PC-9 (cell line): ENCODE measurements at regions of chr2 and their contacts with region 1.

Region 1: DNA sequence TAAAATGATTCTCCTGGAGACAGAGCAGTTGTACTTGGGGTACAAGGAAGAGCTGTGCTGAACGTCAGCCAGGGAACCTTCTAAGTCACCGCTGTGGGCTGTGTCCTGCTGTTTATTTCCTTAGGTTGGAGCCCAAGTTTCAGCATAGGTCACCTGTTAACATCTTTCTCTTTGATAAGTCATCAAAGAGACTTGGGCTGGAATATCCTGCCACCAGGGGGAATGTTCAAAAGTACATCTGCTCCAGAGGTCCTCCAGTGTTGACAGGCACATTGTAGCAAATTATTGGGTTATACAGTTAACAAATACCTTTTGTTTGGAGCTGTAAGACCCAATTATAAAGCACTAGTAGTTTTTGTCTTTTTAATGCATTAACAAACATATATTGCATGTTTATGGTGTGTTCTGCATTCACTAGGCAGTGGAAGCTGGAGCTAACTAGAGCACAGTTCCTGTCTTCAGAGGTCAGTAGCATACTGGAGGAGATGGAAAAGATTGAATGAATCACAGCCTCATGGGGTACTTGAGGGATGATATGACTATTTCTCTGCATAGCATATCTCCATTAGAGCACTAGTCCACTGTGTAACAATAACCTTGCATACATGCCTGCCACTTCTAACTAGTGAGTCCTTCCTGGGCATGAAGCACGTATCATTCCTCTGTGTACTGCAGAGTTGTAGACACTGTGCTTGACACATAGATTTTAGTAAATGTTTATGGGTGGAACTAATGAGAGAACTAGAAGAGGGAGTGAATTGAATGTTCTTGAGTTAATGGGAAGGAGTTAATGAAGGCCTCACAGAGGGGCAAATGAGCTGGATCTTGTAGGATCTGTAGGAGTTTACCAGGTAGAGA is 182.1 kb downstream of the AGAP1 start:
- DNase-seq: peak in 1 of 2 experiments; percentile 65
- H3K4me3 ChIP-seq: no peak overlapping the region; the same call in 1 of the 2 replicates
- H3K27ac ChIP-seq: peak overlapping the region; percentile 66
- H3K4me1 ChIP-seq: peaks cover 75% of the 10 kb centered on the region
- H3K27me3 ChIP-seq: no peaks in the 10 kb centered on the region
- CTCF ChIP-seq: peak; percentile 56; the same call in 1 of the 2 replicates

Region 2: DNA sequence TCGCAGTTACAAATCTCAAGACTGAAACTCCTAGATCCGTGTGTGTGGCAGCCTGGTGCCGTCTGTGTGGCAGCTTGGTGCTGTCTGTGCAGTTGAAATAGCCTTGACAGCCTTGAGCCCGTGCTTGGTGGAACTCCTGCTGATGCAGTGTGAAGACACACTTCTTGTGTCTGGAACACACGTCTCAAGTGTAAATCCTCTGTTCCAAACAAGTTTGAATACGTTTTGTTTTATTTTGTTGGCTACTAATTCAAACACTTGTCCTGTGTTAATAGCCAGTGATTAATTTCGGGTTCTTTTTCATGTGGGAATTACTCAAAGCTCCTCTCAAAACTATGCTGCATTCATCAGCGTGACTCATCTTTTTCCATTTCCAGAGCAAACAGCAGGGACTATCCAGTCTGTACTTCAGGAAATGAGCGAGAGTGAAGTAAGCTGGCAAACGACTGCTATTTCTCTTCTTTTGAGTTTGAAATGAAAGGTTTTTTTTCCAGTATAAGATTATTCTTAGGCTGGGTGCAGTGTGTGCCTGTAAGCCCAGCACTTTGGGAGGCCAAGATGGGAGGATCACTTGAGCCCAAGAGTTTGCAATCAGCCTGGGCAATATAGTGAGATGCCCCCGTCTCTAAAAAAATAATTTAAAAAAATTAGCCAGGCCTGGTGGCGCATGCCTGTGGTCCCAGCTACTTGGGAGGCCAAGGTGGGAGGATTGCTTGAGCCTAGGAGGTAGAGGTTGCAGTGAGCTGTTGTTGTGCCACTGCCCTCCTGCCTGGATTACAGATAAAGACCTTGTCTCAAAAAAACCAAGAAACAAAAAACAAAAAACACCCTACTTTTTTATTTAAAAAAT is 1472.5 kb before region 1 on chr2:
- CTCF ChIA-PET with region 1: no interaction called
- POLR2A ChIA-PET with region 1: interaction called, 14 read pairs
- intact Hi-C with region 1: no loop called
- DNase-seq: peak; percentile 63 to 98
- H3K4me3 ChIP-seq: peak overlapping the region; percentile 1; the same call in 1 of the 2 replicates
- H3K27ac ChIP-seq: peak overlapping the region; percentile 91
- H3K4me1 ChIP-seq: peaks cover 44% of the 10 kb centered on the region
- H3K27me3 ChIP-seq: no peaks in the 10 kb centered on the region
- CTCF ChIP-seq: no peak

Region 3: DNA sequence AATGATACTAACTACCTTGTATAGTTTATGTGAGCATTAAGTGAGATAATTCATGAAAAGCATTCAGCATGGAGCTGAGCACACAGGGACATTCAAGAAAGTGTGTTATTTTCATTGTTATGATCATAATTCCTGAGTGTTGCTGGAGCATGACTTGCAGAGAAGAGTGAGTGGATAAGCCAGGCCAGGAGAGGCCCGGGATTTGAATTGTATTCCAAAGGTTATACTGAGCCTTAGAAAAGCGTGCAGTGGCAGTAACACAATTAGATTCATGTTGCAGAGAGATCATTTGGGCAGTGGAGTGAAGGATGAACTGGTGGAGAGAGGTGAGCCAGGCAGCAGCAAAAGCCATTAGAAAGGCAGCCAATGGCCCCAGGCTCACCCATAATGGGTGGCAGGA is 867.0 kb before region 1 on chr2:
- CTCF ChIA-PET with region 1: no interaction called
- POLR2A ChIA-PET with region 1: no interaction called
- intact Hi-C with region 1: no loop called
- DNase-seq: no peak
- H3K4me3 ChIP-seq: no peak overlapping the region
- H3K27ac ChIP-seq: no peak overlapping the region
- H3K4me1 ChIP-seq: no peaks in the 10 kb centered on the region
- H3K27me3 ChIP-seq: no peaks in the 10 kb centered on the region
- CTCF ChIP-seq: no peak

Region 4: GRCh38 chr2:235703791-235704190 is 27.9 kb after region 1 on chr2:
- CTCF ChIA-PET with region 1: interaction called, 5 read pairs
- POLR2A ChIA-PET with region 1: interaction called, 5 read pairs
- intact Hi-C with region 1: loop called (anchors 2 kb)
- DNase-seq: peak in 1 of 2 experiments; percentile 32
- H3K4me3 ChIP-seq: no peak overlapping the region
- H3K27ac ChIP-seq: peak overlapping the region; percentile 79
- H3K4me1 ChIP-seq: peaks cover 58% of the 10 kb centered on the region
- H3K27me3 ChIP-seq: no peaks in the 10 kb centered on the region
- CTCF ChIP-seq: no peak

Region 5: DNA sequence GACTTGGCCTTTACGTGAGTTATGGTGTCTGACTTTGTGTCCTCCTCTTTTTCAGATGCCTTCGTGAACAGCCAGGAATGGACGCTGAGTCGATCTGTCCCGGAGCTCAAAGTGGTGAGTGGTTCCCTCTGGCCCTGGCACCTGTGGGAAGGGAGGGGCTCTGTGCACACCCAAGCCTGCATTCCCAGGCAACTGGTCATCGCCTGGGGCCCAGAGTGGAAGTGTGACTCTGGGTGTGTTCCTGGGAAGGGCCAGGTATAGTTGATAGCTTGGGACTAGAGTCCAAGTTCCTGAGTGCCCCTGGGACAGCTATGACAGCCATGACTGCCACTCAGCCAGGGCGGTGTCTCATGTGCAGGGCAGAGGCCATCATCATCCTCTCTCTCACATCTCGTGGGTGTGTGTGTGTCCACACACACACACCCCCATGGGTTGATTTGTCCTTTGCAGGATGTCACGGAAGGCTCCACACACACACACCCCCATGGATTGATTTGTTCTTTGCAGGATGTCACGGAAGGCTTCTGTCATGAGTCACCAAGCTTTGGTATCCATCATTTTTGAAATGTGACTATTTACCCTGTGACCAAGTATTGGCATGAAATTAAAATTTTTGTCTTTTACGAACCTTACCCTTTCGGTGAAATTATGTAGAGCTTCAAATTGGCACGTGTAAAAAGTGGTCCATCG is 33.4 kb after region 1 on chr2:
- CTCF ChIA-PET with region 1: interaction called, 5 read pairs
- POLR2A ChIA-PET with region 1: no interaction called
- intact Hi-C with region 1: loop called (anchors 1 kb)
- DNase-seq: peak; percentile 99 to 100
- H3K4me3 ChIP-seq: peak overlapping the region; percentile 9; the same call in 1 of the 2 replicates
- H3K27ac ChIP-seq: peak overlapping the region; percentile 96
- H3K4me1 ChIP-seq: peaks cover 57% of the 10 kb centered on the region
- H3K27me3 ChIP-seq: no peaks in the 10 kb centered on the region
- CTCF ChIP-seq: no peak

Region 6: GRCh38 chr2:235754352-235755207 is 78.7 kb after region 1 on chr2:
- CTCF ChIA-PET with region 1: no interaction called
- POLR2A ChIA-PET with region 1: interaction called, 21 read pairs
- intact Hi-C with region 1: no loop called
- DNase-seq: peak; percentile 56 to 84
- H3K4me3 ChIP-seq: no peak overlapping the region
- H3K27ac ChIP-seq: 0 out of 2 replicates have a peak overlapping the region, but pooled peaks have one; percentile 1
- H3K4me1 ChIP-seq: peaks cover 10% of the 10 kb centered on the region; the same call in 1 of the 2 replicates
- H3K27me3 ChIP-seq: no peaks in the 10 kb centered on the region
- CTCF ChIP-seq: no peak